MCF 10A (cell line): ENCODE measurements at regions of chr6 and their contacts with region 1.

Region 1: GRCh38 chr6:24283043-24283985 is 74.5 kb downstream of the DCDC2 start:
- DNase-seq: peak; percentile 82
- H3K4me3 Mint-ChIP-seq: peak overlapping the region; percentile 52
- H3K27ac Mint-ChIP-seq: no peak overlapping the region
- H3K4me1 Mint-ChIP-seq: no peaks in the 10 kb centered on the region
- H3K27me3 Mint-ChIP-seq: peaks cover 13% of the 10 kb centered on the region
- CTCF ChIP-seq: peak; percentile 75

Region 2: DNA sequence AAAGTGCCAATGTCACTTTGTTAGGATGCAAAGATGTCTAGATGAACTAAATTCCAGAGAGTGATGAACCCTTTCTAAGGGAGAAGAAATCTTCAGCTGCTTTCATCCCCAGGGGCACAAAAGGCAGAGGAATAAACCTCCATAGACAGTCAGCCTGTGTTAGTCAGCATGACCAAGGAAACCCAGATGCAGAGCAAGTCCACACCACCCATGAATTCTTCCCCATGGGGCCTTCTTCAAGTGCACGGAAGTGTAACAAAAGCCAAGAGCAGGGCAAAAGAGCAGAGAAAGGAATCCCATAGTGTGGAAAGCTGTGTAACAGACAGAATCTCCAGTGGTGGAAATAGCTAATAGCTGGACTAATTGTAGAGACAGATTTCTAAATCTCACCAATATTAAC is 24.6 kb after region 1 on chr6:
- CTCF ChIA-PET with region 1: interaction called, 14 read pairs
- POLR2A ChIA-PET with region 1: interaction called, 4 read pairs
- intact Hi-C with region 1: no loop called
- DNase-seq: no peak
- H3K4me3 Mint-ChIP-seq: no peak overlapping the region
- H3K27ac Mint-ChIP-seq: no peak overlapping the region
- H3K4me1 Mint-ChIP-seq: no peaks in the 10 kb centered on the region
- H3K27me3 Mint-ChIP-seq: no peaks in the 10 kb centered on the region
- CTCF ChIP-seq: no peak

Region 3: GRCh38 chr6:24353861-24354260 is 70.5 kb after region 1 on chr6:
- CTCF ChIA-PET with region 1: interaction called, 10 read pairs
- POLR2A ChIA-PET with region 1: no interaction called
- intact Hi-C with region 1: loop called (anchors 1 kb)
- DNase-seq: no peak
- H3K4me3 Mint-ChIP-seq: no peak overlapping the region
- H3K27ac Mint-ChIP-seq: no peak overlapping the region
- H3K4me1 Mint-ChIP-seq: no peaks in the 10 kb centered on the region
- H3K27me3 Mint-ChIP-seq: peaks cover 12% of the 10 kb centered on the region
- CTCF ChIP-seq: no peak

Region 4: GRCh38 chr6:24385536-24386269 is 102.4 kb after region 1 on chr6:
- CTCF ChIA-PET with region 1: interaction called, 140 read pairs
- POLR2A ChIA-PET with region 1: interaction called, 18 read pairs
- intact Hi-C with region 1: loop called (anchors 1 kb)
- DNase-seq: no peak
- H3K4me3 Mint-ChIP-seq: no peak overlapping the region
- H3K27ac Mint-ChIP-seq: no peak overlapping the region
- H3K4me1 Mint-ChIP-seq: peaks cover 6% of the 10 kb centered on the region
- H3K27me3 Mint-ChIP-seq: no peaks in the 10 kb centered on the region
- CTCF ChIP-seq: no peak

Region 5: DNA sequence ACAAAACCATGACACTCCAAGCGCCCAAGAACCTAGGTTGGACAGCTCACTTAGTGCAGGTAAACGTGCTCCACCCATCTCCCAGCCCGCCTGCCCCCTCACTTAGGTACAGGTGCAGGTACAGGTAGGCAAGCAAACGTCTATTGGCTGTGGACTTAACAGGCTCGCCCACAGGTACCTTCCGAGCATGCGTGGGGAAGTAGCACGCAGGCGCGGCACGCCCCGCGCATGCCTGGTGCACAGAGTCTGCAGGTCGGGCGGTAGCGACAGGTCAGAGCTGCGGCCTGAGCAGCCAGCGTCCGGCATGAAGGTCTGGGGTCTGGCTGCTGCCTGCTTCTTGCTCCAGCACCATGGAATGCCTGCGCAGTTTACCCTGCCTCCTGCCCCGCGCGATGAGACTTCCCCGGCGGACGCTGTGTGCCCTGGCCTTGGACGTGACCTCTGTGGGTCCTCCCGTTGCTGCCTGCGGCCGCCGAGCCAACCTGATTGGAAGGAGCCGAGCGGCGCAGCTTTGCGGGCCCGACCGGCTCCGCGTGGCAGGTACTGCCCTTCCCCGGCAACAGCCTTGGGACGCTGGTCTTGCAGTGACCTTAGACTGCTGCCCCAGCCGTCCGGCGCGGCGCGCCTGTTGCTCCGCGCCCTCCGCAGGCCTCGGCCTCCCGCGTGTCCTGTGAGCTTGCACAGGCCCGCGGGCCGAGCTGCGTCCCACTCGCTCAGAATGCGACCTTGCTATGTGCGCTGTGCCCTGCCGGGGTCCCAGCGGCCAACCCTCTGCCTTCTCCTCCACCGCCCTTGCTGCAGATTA is 119.6 kb after region 1 on chr6 and contains the start of gene MRS2:
- CTCF ChIA-PET with region 1: interaction called, 10 read pairs
- POLR2A ChIA-PET with region 1: interaction called, 4 read pairs
- intact Hi-C with region 1: no loop called
- DNase-seq: peak; percentile 92
- H3K4me3 Mint-ChIP-seq: peak within 1 kb of the TSS; percentile 97
- H3K27ac Mint-ChIP-seq: peak within 1 kb of the TSS; percentile 88
- H3K4me1 Mint-ChIP-seq: peaks cover 11% of the 10 kb centered on the region
- H3K27me3 Mint-ChIP-seq: no peaks in the 10 kb centered on the region
- CTCF ChIP-seq: no peak
- total RNA-seq, gene MRS2: 21.2 and 23.0 TPM in 2 replicates

Region 6: GRCh38 chr6:24689964-24690363 is 406.6 kb after region 1 on chr6:
- CTCF ChIA-PET with region 1: interaction called, 4 read pairs
- POLR2A ChIA-PET with region 1: no interaction called
- intact Hi-C with region 1: loop called (anchors 1 kb)
- DNase-seq: no peak
- H3K4me3 Mint-ChIP-seq: no peak overlapping the region
- H3K27ac Mint-ChIP-seq: no peak overlapping the region
- H3K4me1 Mint-ChIP-seq: peaks cover 6% of the 10 kb centered on the region
- H3K27me3 Mint-ChIP-seq: no peaks in the 10 kb centered on the region
- CTCF ChIP-seq: no peak